Activated T-helper 1 cell treated with anti-CD3 and anti-CD28 coated beads, Interleukin-12 subunit alpha, Interleukin-12 subunit beta, Interleukin-2, Interleukin-4 antibody, amounts not matched to agents 30 ng/mL and 10 ng/mL and 1 ng/mL, durations not matched to agents 14 hours and 24 hours and 36 hours (primary cell): ENCODE measurements at regions of chr3 and their contacts with region 1.

Region 1: GRCh38 chr3:186259612-186260383 is 102.2 kb downstream of the DGKG start:
- DNase-seq: peak; percentile 37
- H3K4me3 Mint-ChIP-seq: no peak overlapping the region
- H3K27ac Mint-ChIP-seq: peak overlapping the region; percentile 25
- H3K4me1 Mint-ChIP-seq: peaks cover 21% of the 10 kb centered on the region
- H3K27me3 Mint-ChIP-seq: peaks cover 15% of the 10 kb centered on the region

Region 2: GRCh38 chr3:186193534-186194450 is 66.0 kb before region 1 on chr3:
- intact Hi-C with region 1: no loop called
- DNase-seq: no peak
- H3K4me3 Mint-ChIP-seq: no peak overlapping the region
- H3K27ac Mint-ChIP-seq: no peak overlapping the region
- H3K4me1 Mint-ChIP-seq: no peaks in the 10 kb centered on the region
- H3K27me3 Mint-ChIP-seq: peaks cover 36% of the 10 kb centered on the region

Region 3: DNA sequence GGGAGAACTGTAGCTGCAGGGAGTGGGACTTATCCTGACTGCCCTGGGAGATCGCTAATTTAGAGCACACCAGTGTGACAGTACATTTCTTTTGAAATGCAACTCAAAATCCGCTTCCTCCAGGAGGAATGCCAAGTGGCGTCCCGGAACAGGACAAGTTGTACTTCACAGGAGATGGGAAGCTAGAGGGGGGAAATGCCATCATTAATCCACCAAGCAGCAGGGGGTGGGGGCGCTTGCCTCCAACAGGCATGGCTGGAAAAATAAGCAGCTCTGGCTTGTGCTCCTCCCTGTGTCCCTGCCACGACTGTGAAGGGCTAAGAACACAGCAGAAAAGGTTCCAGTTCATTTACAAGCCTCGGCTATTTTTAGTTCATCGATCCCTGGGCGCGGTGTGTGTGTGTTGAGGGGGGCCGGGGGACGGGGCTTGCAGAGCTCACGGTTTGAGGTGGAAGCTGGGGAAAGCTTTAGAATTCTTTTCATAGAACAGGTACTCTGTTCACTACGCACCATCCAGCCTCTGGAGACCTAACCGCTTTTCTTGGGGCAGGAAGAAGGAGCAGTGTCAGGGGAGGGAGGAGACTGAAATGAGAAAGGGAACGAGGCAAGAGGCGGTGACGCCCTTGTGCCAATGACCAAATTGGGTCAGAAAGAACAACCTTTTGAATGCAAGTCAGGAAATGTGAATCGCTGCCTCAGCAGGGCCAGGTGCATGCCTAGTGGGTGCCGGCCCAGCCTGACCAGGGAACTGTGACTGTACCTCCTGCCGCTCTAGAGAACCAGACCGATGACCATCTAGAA is 154.0 kb after region 1 on chr3:
- intact Hi-C with region 1: loop called (anchors 1 kb)
- DNase-seq: peak; percentile 2
- H3K4me3 Mint-ChIP-seq: peak overlapping the region; percentile 47
- H3K27ac Mint-ChIP-seq: no peak overlapping the region
- H3K4me1 Mint-ChIP-seq: peaks cover 25% of the 10 kb centered on the region
- H3K27me3 Mint-ChIP-seq: peaks cover 7% of the 10 kb centered on the region

Region 4: DNA sequence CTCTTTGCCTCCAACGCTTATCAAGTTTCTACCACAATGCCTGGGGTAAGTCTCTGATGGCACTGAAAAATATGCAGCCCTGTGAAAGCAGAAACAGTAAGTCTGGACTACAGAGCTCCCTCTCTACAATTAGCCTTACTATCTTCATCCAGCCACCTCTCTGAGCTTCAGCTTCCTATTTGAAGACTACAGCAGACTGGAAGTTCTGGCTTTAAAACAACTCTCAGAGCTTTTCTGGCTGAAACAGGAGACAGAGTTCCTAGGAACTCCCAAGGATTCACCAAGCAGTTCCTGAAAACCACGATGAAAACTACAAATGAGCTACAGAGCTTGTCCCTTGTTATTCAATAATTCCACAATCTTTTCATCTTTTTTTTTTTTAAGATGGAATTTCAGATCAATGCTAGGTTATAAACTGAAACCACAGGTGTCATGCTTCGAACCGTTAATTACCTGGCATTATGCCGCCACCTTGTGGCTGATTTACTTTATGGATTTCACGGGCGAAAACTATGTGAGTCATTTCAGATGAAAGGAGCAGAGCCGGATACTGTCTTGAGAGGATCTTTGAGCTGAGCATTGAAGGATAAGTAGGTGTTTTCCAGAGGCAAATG is 280.5 kb after region 1 on chr3:
- intact Hi-C with region 1: loop called (anchors 1 kb)
- DNase-seq: peak; percentile 76
- H3K4me3 Mint-ChIP-seq: no peak overlapping the region
- H3K27ac Mint-ChIP-seq: no peak overlapping the region
- H3K4me1 Mint-ChIP-seq: peaks cover 55% of the 10 kb centered on the region
- H3K27me3 Mint-ChIP-seq: no peaks in the 10 kb centered on the region

Region 5: GRCh38 chr3:188148318-188148717 is 1888.5 kb after region 1 on chr3:
- intact Hi-C with region 1: loop called (anchors 5 kb)
- DNase-seq: no peak
- H3K4me3 Mint-ChIP-seq: no peak overlapping the region
- H3K27ac Mint-ChIP-seq: peak overlapping the region; percentile 32
- H3K4me1 Mint-ChIP-seq: peaks cover 42% of the 10 kb centered on the region
- H3K27me3 Mint-ChIP-seq: no peaks in the 10 kb centered on the region